Dendritic cell treated with granulocyte-macrophage colony-stimulating factor and Interleukin-4, amounts not matched to agents 40 ng/mL and 50 ng/mL, for 4 days (primary cell): ENCODE measurements at regions of chr2 and their contacts with region 1.

Region 1: GRCh38 chr2:219294356-219295351 is 14.5 kb downstream of the PTPRN start:
- H3K4me3 Mint-ChIP-seq: peak overlapping the region; percentile 73
- H3K27ac Mint-ChIP-seq: peak overlapping the region; percentile 76
- H3K4me1 Mint-ChIP-seq: peaks cover 13% of the 10 kb centered on the region
- H3K27me3 Mint-ChIP-seq: peaks cover 59% of the 10 kb centered on the region

Region 2: DNA sequence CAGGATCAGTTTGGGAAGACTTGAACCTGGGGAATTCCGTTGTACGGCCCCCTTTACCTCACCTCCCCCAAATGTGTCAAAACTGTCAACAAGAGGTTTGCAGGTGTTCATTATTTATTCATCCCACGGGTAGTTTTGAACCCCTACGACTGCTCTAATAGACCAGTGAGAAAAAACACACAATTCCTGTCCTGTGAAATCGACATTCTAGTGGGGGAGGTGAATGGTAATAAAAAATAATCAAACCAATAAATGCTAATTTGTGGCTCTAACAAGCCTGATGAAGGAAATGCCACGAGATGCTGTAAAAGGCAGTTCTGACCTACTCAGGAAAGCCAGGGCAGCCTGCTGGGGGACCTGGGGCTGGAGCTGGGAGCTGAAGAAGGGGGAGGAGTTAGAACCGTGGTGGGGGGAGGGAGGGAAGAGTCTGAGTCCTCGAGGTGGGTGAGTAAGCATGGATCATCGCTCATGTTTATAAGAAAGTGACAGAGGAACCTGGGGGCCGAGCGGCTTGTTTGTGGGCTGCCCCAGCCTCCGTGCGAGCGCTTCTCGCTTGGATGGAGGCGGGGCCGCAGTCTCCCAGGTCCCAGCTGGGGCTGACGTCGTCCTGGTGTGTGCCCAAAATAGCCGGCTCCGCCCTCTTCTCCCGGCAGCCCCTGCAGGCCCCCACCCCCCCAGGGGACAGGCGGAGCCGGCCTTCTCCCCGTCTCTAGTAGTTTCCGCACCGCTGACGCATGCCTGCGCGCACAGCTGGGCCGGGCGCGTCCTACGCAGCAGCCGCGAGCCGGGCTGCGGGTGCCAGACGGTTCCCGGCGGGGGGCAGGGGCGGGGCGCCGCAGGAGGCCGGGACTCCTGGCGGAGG is 15.8 kb before region 1 on chr2 and contains the start of gene DNAJB2:
- intact Hi-C with region 1: loop called (anchors 1 kb)
- H3K4me3 Mint-ChIP-seq: peak within 1 kb of the TSS; percentile 86
- H3K27ac Mint-ChIP-seq: peak within 1 kb of the TSS; percentile 89
- H3K4me1 Mint-ChIP-seq: peaks cover 50% of the 10 kb centered on the region
- H3K27me3 Mint-ChIP-seq: peaks cover 5% of the 10 kb centered on the region